Sigmoid colon (tissue), 7 donors: ENCODE measurements at regions of chr14 and their contacts with region 1.

Region 1: DNA sequence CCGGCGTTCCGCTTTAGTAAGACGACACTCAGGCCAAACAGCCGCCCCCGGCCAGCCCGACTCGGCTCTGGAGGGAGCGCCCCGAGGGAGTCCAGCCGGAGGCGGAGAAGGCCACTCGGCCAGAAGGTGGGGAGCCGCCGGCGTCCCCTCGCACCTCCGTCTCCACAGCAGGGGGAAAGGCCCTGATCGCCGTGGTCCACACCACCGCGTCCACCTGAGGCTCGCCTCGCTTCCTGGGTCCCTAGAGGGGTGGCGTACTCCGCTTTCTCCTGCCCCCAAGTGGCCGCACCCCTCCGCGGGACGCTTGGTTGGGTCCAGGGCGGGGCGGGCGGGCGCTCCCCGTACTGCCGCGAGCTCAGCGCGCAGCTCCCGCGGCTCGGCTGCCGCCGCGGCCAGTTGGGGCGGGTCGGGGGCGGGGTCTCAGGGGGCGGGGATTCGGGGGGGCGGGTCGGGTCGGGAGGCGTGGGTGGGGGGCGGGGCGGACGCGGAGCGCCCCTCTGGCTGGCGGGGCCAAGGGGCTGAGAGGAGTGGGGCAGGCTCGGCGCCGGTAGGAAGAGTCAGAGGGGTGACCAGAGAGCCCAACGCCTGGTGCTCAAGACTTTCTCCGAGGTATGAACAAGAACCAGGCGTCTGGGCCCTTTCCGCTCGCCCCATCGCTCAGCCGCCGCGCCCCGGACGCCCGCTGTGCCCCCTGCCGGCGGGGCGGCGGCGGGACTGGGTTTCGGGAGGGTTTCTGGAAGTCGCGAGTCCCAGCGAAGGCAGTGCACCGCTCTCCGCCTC is at the start of gene FRMD6:
- DNase-seq: peak; percentile 93
- H3K4me3 ChIP-seq: peak within 1 kb of the TSS; percentile 73 to 96 (median 88)
- H3K27ac ChIP-seq: peak within 1 kb of the TSS; percentile 92 to 99 (median 96)
- H3K4me1 ChIP-seq: peaks cover 0 to 50% (median 29%) of the 10 kb centered on the region in 4 donors
- H3K27me3 ChIP-seq: no peaks in the 10 kb centered on the region
- CTCF ChIP-seq: peak; percentile 68 to 84 (median 79)
- EP300 ChIP-seq: no peak
- POLR2A ChIP-seq: peak; percentile 70
- total RNA-seq, gene FRMD6: 38.3 to 85.6 (median 49.6) TPM

Region 2: DNA sequence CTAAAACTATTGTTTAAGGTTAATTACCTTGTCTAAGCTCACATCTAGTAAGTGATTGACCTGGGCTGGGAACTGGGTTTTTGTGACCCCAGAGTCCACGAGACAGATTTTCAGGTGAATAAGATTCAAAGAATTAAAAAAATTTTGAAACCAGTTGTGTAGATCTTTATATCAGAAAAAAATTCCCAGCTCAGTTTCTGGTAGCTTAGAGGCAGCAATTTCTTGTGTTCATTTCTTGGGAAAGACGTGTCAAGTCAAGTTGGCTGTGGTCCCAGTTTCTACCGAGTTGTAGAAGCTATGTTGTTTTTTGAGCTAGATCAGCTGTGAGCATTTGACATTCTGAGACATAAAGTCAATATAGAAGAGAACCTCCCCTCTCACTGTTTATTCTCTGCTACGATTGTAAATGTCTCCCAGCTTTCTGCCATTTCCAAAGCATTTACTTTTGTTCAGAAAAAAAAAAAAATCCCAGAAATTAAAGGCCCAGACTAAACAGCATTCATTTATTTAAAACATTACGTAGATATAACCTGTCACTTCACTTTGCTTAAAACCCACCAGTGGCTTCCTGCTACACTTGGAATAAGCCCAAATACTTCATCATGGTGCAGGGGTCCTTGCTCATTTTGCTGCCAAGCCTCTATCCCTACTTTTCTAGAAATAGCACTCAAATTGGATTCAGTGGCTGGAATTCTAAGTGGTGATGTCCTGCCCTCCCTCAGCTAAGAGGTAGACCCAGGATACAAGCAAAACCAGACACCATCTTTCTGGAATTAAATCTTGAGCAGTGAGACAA is 686.8 kb before region 1 on chr14:
- intact Hi-C with region 1: loop called (anchors 5 kb)
- DNase-seq: peak; percentile 92
- H3K4me3 ChIP-seq: no peak overlapping the region
- H3K27ac ChIP-seq: peak overlapping the region; percentile 50 to 77 (median 61)
- H3K4me1 ChIP-seq: peaks cover 0 to 47% (median 35%) of the 10 kb centered on the region in 4 donors
- H3K27me3 ChIP-seq: no peaks in the 10 kb centered on the region
- CTCF ChIP-seq: no peak
- EP300 ChIP-seq: peak in 2 of 4 donors; percentile 3 to 51
- POLR2A ChIP-seq: no peak

Region 3: GRCh38 chr14:51239813-51240803 is 411.5 kb before region 1 on chr14 and contains the start of gene TMX1:
- intact Hi-C with region 1: loop called (anchors 5 kb)
- DNase-seq: peak; percentile 99
- H3K4me3 ChIP-seq: peak within 1 kb of the TSS; percentile 81 to 97 (median 91)
- H3K27ac ChIP-seq: peak within 1 kb of the TSS; percentile 85 to 88 (median 86)
- H3K4me1 ChIP-seq: peaks cover 0 to 25% (median 20%) of the 10 kb centered on the region in 4 donors
- H3K27me3 ChIP-seq: no peaks in the 10 kb centered on the region
- CTCF ChIP-seq: no peak
- EP300 ChIP-seq: peak in 1 of 4 donors; percentile 7
- POLR2A ChIP-seq: peak; percentile 81 to 84
- total RNA-seq, gene TMX1: 21.2 to 38.3 (median 27.7) TPM

Region 4: GRCh38 chr14:51283402-51284085 is 368.0 kb before region 1 on chr14:
- intact Hi-C with region 1: loop called (anchors 2 kb)
- DNase-seq: no peak
- H3K4me3 ChIP-seq: no peak overlapping the region
- H3K27ac ChIP-seq: no peak overlapping the region
- H3K4me1 ChIP-seq: peaks cover 0 to 11% (median 0%) of the 10 kb centered on the region in 4 donors
- H3K27me3 ChIP-seq: no peaks in the 10 kb centered on the region
- CTCF ChIP-seq: peak; percentile 79 to 84 (median 82)
- EP300 ChIP-seq: no peak
- POLR2A ChIP-seq: no peak

Region 5: GRCh38 chr14:51507906-51508511 is 143.6 kb before region 1 on chr14:
- intact Hi-C with region 1: no loop called
- DNase-seq: peak; percentile 89
- H3K4me3 ChIP-seq: no peak overlapping the region
- H3K27ac ChIP-seq: peak overlapping the region; percentile 61 to 71 (median 68)
- H3K4me1 ChIP-seq: peaks cover 0 to 28% (median 25%) of the 10 kb centered on the region in 4 donors
- H3K27me3 ChIP-seq: no peaks in the 10 kb centered on the region
- CTCF ChIP-seq: no peak
- EP300 ChIP-seq: no peak
- POLR2A ChIP-seq: no peak

Region 6: DNA sequence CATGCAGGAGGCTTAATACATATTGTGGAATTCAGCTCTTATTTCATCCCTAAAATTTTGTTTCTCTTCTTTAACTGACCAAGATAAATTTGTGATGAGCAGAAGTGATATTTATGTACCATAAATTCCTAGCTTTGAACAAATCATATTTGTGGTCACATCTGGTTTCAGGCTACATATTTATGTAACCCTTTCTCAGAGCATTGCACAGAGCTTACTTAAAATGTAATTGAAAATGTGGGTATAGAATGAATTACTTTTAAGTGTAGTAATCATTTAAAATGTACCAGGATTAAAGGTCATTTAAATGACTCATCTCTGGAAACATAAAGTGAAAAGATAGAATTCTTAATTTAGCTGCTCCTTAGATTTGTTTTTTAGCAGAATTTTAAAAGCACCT is 129.8 kb before region 1 on chr14:
- intact Hi-C with region 1: no loop called
- DNase-seq: no peak
- H3K4me3 ChIP-seq: no peak overlapping the region
- H3K27ac ChIP-seq: no peak overlapping the region
- H3K4me1 ChIP-seq: peaks cover 0 to 15% (median 6%) of the 10 kb centered on the region in 4 donors
- H3K27me3 ChIP-seq: no peaks in the 10 kb centered on the region
- CTCF ChIP-seq: no peak
- EP300 ChIP-seq: no peak
- POLR2A ChIP-seq: no peak

Region 7: GRCh38 chr14:51539571-51540037 is 112.0 kb before region 1 on chr14:
- intact Hi-C with region 1: loop called (anchors 5 kb)
- DNase-seq: no peak
- H3K4me3 ChIP-seq: no peak overlapping the region
- H3K27ac ChIP-seq: peak overlapping the region in 1 of 4 donors; percentile 58
- H3K4me1 ChIP-seq: peaks cover 0 to 16% (median 10%) of the 10 kb centered on the region in 4 donors
- H3K27me3 ChIP-seq: no peaks in the 10 kb centered on the region
- CTCF ChIP-seq: no peak
- EP300 ChIP-seq: no peak
- POLR2A ChIP-seq: no peak

Region 8: DNA sequence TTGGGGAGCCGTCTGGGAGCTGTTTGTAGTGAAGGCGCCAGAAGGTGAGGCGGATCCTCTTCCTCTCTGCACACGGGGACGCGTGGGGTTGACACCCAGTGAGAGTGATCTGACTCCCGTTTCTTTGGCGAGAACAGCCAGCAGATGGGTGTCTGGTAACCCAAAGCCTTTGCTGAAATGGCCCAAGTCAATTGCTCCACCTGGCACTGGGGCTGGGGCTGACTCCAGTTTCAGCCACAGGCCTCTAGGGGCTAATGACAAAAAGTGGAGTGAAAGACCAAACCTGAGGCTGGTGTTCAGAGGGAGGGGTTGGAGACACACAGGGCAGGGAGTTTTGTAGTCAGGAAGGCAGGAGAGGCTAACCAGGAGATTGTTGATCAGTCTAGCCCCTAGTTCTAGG is 87.2 kb after region 1 on chr14:
- intact Hi-C with region 1: no loop called
- DNase-seq: no peak
- H3K4me3 ChIP-seq: no peak overlapping the region
- H3K27ac ChIP-seq: no peak overlapping the region
- H3K4me1 ChIP-seq: no peaks in the 10 kb centered on the region
- H3K27me3 ChIP-seq: no peaks in the 10 kb centered on the region
- CTCF ChIP-seq: no peak
- EP300 ChIP-seq: no peak
- POLR2A ChIP-seq: no peak

Region 9: GRCh38 chr14:51780006-51780692 is 128.6 kb after region 1 on chr14:
- intact Hi-C with region 1: loop called (anchors 5 kb)
- DNase-seq: peak; percentile 87
- H3K4me3 ChIP-seq: no peak overlapping the region
- H3K27ac ChIP-seq: no peak overlapping the region
- H3K4me1 ChIP-seq: peaks cover 0 to 21% (median 11%) of the 10 kb centered on the region in 4 donors
- H3K27me3 ChIP-seq: no peaks in the 10 kb centered on the region
- CTCF ChIP-seq: peak; percentile 59 to 80 (median 75)
- EP300 ChIP-seq: no peak
- POLR2A ChIP-seq: no peak

Region 10: DNA sequence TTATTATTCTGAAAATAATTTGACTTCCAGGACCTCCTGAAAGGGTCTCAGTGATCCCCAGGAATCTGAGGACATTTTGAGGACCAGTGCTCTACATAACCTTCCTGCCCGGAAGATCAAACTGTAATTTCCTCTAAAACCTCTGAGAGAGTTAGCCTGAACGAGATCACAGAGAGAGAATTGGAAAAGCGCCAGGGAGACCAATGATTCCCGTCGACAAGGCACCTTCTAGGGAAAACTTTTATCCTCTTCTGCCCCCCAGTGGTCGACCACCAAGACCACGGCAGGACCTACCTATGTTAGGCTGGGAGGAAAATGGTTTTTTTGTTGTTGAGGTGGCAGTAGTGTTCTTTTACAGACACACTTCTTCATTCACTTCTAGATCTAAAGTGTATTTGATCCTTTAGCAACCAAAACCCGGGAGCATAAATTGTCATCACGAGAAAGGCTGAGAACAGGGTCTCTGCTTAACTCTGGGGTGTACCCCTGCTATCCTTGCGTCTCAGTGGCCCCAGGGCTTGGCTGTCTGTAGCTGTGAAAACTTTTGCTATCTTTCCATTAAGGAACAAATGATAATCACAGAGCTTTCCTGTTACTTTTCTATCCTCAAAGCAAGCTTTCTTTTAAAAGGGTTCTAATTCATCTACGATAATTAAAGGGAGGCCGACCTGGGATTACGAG is 480.2 kb after region 1 on chr14:
- intact Hi-C with region 1: loop called (anchors 5 kb)
- DNase-seq: peak; percentile 93
- H3K4me3 ChIP-seq: no peak overlapping the region
- H3K27ac ChIP-seq: peak overlapping the region in 1 of 4 donors; percentile 34
- H3K4me1 ChIP-seq: peaks cover 0 to 27% (median 15%) of the 10 kb centered on the region in 4 donors
- H3K27me3 ChIP-seq: no peaks in the 10 kb centered on the region
- CTCF ChIP-seq: peak; percentile 51 to 74 (median 66)
- EP300 ChIP-seq: no peak
- POLR2A ChIP-seq: no peak